ENCODE measurements at regions of chr11 and their contacts with region 1.

Region 1: GRCh38 chr11:12207384-12208150 is 97.2 kb downstream of the MICAL2 start:
- DNase-seq: peak; percentile 68
- H3K4me3 Mint-ChIP-seq: peak overlapping the region; percentile 68
- H3K27ac Mint-ChIP-seq: peak overlapping the region; percentile 95
- H3K4me1 Mint-ChIP-seq: peaks cover 68% of the 10 kb centered on the region
- H3K27me3 Mint-ChIP-seq: no peaks in the 10 kb centered on the region

Region 2: GRCh38 chr11:12174477-12175143 is 33.0 kb before region 1 on chr11:
- intact Hi-C with region 1: loop called (anchors 1 kb)
- DNase-seq: peak; percentile 74
- H3K4me3 Mint-ChIP-seq: peak overlapping the region; percentile 78
- H3K27ac Mint-ChIP-seq: peak overlapping the region; percentile 94
- H3K4me1 Mint-ChIP-seq: peaks cover 71% of the 10 kb centered on the region
- H3K27me3 Mint-ChIP-seq: no peaks in the 10 kb centered on the region

Region 3: DNA sequence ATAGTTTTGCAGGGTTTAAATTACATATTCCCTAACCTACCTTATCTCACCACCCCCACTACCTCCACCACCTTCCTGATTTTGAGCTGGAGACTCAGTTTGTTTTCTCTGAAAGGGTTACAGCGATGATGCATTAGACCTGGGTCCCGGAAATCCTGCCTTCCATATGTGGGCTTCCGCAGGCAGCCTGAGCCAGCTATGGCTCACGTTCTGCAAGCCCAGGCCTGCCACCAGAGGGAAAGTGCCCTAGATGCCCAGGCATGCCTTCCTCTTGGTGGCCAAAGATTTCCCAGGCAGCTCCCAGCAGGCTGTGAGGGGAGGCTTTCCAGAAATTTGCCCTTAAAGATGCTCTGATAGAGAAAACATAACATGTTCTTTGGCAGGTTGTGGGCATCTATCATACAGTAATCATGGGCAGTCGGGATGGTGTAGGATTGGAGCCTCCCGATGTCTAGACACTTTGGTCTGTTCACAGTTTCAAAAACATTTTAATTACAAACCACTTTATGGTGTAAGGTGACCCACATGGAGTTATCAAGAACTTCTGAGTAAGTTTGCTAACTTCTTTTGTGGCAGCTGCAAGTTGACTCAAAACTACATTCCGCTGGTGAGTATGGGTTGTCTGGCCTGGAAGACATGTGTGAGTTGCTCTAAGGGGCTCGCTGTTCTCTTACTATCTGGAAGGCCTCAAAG is 17.9 kb before region 1 on chr11:
- intact Hi-C with region 1: loop called (anchors 1 kb)
- DNase-seq: peak; percentile 73
- H3K4me3 Mint-ChIP-seq: peak overlapping the region; percentile 65
- H3K27ac Mint-ChIP-seq: peak overlapping the region; percentile 91
- H3K4me1 Mint-ChIP-seq: peaks cover 79% of the 10 kb centered on the region
- H3K27me3 Mint-ChIP-seq: no peaks in the 10 kb centered on the region

Region 4: GRCh38 chr11:12195768-12196167 is 11.8 kb before region 1 on chr11:
- intact Hi-C with region 1: loop called (anchors 1 kb)
- DNase-seq: peak; percentile 90
- H3K4me3 Mint-ChIP-seq: peak overlapping the region; percentile 94
- H3K27ac Mint-ChIP-seq: peak overlapping the region; percentile 96
- H3K4me1 Mint-ChIP-seq: peaks cover 70% of the 10 kb centered on the region
- H3K27me3 Mint-ChIP-seq: no peaks in the 10 kb centered on the region

Region 5: DNA sequence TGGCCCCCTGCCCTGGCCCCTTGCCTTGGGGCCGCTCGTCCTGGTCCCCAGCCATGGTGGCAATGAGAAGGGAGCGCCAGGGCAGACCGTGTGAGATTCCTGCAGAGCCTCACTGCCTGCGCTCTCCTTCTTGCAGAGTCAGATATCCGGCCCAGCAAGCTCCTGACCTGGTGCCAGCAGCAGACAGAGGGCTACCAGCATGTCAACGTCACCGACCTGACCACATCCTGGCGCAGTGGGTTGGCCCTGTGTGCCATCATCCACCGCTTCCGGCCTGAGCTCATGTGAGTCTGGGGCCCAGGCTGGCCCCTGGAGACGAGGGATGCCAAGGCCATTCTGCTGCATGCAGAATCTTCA is 16.9 kb after region 1 on chr11:
- intact Hi-C with region 1: loop called (anchors 1 kb)
- DNase-seq: peak; percentile 95
- H3K4me3 Mint-ChIP-seq: peak overlapping the region; percentile 76
- H3K27ac Mint-ChIP-seq: peak overlapping the region; percentile 92
- H3K4me1 Mint-ChIP-seq: peaks cover 48% of the 10 kb centered on the region
- H3K27me3 Mint-ChIP-seq: no peaks in the 10 kb centered on the region

Measured in activated CD4-positive, alpha-beta T cell treated with anti-CD3 and anti-CD28 coated beads, Interleukin-2, amount 10 ng/mL, durations not matched to agents 24 days and 14 days (primary cell).